Left cardiac atrium (tissue), 4 donors: ENCODE measurements at regions of chr7 and their contacts with region 1.

Region 1: DNA sequence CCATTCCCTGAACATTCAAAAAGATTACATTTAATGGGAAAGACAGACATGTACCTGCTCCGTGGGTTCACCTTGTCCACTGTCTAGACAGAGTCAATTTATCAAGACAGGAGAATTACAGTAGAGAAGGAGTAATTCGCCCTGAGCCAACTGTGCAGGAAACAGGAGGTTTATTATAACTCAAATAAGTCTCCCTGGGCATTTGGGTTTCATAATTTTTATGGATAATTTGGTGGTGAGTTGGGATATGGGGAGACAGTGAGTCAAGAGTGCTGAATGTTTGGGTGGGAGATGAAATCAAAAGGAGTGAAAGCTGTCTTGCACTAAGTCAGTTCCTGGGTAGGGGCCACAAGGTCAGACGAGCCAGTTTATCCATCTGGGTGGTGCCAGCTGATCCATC is 165.9 kb upstream of the NAMPT start:
- DNase-seq: no peak
- ATAC-seq: no peak

Region 2: DNA sequence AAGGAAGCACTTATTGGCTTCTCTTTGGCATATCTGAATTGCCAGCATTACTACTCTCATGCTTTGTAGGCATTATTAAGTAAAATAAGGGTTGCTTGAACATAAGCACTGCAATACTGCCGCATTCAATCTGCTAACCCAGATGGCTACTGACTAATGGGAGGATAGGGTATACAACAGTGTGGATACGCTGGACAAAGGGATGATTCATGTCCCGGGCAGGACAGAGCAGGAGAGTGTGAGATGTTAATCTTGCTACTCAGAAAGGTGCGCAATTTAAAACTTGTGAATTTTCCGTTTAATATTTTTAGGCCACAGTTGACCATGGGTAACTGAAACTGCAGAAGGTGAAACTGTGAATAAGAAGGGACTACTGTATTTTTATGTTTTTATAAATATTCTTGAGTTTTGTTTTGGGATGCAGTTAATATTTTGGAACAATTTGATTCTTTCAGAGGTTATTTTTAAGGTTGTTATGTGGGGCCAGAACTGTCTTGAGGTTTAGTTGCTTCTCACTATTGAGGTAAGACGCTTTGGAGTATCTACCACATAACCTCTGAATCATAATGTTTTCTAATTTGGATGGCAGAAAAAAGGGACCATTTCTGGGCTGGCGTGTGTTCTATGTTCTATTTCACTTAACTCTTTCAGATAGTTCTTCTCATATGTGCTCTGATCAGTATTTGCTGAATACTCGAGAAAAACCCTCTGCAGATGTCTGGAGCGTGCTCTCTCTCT is 262.9 kb before region 1 on chr7:
- intact Hi-C with region 1: loop called in 1 of 2 experiments (anchors 5 kb)
- DNase-seq: no peak
- ATAC-seq: no peak

Region 3: GRCh38 chr7:107068156-107068555 is 617.4 kb after region 1 on chr7:
- intact Hi-C with region 1: no loop called
- DNase-seq: no peak
- ATAC-seq: no peak